Right ventricle myocardium inferior (tissue), 1 donor: ENCODE measurements at regions of chr12 and their contacts with region 1.

Region 1: GRCh38 chr12:44015335-44015941 is 179.6 kb downstream of the TMEM117 start:
- DNase-seq: no peak
- ATAC-seq: no peak

Region 2: DNA sequence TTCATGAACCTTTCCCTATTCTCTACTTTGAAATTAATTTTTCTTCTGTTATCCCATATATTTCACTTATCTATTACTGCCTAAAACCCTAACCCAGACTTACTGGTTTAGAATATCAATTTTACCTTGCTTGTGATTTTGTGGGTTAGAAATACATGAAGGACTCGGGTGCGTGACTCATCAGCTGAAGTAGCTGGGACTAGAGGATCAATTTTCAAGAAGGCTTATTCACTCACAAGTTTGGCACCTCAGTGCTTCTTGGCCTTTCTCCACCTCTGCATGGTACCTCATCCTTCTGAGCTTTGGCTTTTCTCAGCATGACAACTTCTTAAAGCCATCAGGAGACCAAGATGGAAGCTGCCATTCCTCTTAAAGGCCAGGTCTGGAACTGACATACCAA is 121.8 kb before region 1 on chr12:
- intact Hi-C with region 1: no loop called
- DNase-seq: no peak
- ATAC-seq: no peak

Region 3: GRCh38 chr12:44930972-44931600 is 915.6 kb after region 1 on chr12:
- intact Hi-C with region 1: loop called (anchors 5 kb)
- DNase-seq: no peak
- ATAC-seq: no peak